ENCODE measurements at regions of chr1 and their contacts with region 1.

Region 1: DNA sequence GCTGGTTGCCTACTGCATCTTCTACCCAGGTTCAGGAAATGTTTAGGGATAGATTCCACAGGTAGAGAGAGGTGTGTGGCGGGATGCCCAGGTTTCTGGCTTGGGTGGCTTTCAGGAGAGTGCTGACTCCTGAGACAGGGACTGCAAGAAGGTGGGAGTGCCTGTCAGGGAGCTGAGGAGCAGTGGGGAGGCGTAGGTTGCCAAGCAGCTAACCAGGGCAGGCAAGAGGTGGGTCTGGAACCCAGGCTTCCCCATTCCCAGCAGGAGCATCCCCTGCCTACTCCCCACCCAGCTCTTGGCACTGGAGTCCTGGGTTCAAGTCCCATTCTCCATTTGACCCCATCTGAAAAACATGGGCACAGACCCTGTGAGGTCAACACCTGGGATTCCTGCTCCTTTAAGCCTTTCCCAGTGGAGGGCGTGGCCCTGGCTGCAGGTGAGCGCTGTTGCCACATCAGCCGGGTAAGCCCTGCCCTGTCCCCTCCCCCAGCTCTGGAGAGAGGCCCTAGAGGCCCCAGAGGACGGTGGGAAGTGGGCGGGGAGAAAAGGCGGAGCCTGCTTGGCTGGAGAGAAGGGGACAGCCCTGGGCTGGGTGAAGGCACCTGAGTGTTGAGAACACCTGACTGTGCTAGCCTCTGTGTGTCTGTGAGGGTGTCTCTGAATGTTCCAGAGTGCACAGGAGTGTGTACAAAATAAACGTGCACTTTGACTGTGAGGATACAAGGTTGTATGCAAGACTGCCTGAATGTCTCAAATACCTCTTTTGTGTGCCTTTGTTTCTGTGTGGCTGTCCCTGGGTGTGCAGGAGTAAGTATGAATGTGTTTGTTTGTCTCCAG is 14.0 kb upstream of the SYNC start:
- DNase-seq: no peak
- H3K4me3 ChIP-seq: peak overlapping the region in 1 of 4 donors; percentile 16
- H3K27ac ChIP-seq: peak overlapping the region; percentile 83 to 92 (median 90)
- H3K4me1 ChIP-seq: peaks cover 11 to 50% (median 13%) of the 10 kb centered on the region in 3 donors
- H3K27me3 ChIP-seq: no peaks in the 10 kb centered on the region
- CTCF ChIP-seq: no peak
- POLR2A ChIP-seq: peak in 1 of 4 donors; percentile 39

Region 2: GRCh38 chr1:32773018-32773763 is 56.7 kb after region 1 on chr1:
- intact Hi-C with region 1: loop called (anchors 5 kb)
- DNase-seq: no peak
- H3K4me3 ChIP-seq: no peak overlapping the region
- H3K27ac ChIP-seq: peak overlapping the region in 3 of 4 donors; percentile 36 to 46 (median 37)
- H3K4me1 ChIP-seq: peaks cover 4 to 75% (median 33%) of the 10 kb centered on the region in 3 donors
- H3K27me3 ChIP-seq: no peaks in the 10 kb centered on the region
- CTCF ChIP-seq: peak; percentile 85 to 96 (median 92)
- POLR2A ChIP-seq: no peak

Region 3: GRCh38 chr1:32876341-32877210 is 160.0 kb after region 1 on chr1:
- intact Hi-C with region 1: loop called (anchors 10 kb)
- DNase-seq: no peak
- H3K4me3 ChIP-seq: no peak overlapping the region
- H3K27ac ChIP-seq: no peak overlapping the region
- H3K4me1 ChIP-seq: peaks cover 5 to 28% (median 6%) of the 10 kb centered on the region in 3 donors
- H3K27me3 ChIP-seq: peaks cover 0 to 59% (median 0%) of the 10 kb centered on the region in 4 donors
- CTCF ChIP-seq: peak; percentile 69 to 88 (median 80)
- POLR2A ChIP-seq: no peak